ENCODE measurements at regions of chr12 and their contacts with region 1.

Region 1: DNA sequence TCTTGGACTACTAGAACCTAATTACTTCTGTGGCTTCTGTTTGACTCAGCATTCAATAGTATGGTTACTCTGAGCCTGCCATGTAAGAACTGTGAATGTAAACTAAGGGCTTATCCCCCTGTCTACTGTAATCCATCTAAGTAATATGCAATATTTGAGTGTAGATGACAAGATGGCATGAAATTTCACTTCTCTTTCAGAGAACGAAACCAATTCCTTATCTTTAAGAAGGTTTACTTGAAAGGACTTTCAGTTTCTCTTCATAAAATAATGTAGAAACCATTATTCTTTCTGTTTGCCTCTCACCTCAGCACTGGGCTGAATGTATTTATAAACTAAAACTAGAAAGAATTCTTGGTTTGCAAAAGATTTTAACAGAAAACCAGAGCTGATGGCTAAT is 60.4 kb upstream of the ARID2 start:
- DNase-seq: no peak

Region 2: GRCh38 chr12:45637706-45638105 is 31.4 kb before region 1 on chr12:
- intact Hi-C with region 1: loop called in 1 of 2 experiments (anchors 2 kb)
- DNase-seq: no peak